BJ (cell line): ENCODE measurements at regions of chr14 and their contacts with region 1.

Region 1: GRCh38 chr14:24366721-24367513 is 1.1 kb upstream of the NFATC4 start:
- DNase-seq: peak; percentile 80
- H3K4me3 ChIP-seq: peak overlapping the region; percentile 51
- H3K27me3 ChIP-seq: no peaks in the 10 kb centered on the region
- CTCF ChIP-seq: no peak

Region 2: DNA sequence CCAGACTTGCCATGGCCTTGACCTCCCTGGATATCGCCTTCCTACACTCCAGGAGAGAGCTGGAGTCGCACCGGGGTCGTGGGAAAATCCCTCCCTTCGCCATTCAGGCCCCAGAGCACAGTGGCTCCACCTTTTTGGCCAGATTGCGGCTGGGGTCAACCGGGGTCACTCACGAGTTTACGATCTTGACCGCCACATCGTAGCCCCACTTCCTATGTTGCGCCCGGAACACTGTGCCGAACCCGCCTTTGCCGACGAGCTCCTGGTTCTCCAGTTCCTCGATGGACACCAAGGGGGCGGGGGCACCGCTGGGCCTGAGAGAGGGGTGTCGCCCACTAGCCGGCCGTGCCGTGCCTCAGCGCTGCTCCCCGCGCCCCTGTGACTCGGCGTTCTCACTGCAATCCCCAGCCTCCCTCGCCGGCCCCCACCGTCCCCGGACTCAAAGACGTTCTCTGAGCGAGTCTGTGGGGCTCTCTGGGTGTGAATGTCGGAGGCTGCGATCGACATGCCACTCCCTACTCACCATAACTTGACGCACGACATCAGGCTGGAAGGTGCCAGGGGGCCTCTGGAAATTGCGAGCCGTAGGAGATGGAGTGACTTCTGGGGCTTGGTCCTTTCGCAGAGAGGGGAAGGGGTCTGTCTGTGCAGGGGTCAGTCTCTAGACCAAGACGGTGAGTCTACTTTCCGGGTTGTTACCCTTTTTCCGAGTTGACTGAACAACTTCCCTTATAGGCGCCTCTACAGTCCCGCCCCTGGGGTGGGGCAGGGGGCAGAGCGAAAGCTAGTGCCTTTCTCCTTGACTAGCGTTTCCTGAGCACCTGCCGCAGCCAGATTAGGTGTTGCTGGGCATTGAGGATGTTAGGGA is 27.4 kb before region 1 on chr14 and contains the start of gene RIPK3:
- CTCF ChIA-PET with region 1: interaction called, 51 read pairs
- POLR2A ChIA-PET with region 1: no interaction called
- DNase-seq: no peak
- H3K4me3 ChIP-seq: peak within 1 kb of the TSS; percentile 41
- H3K27me3 ChIP-seq: peaks cover 5% of the 10 kb centered on the region
- CTCF ChIP-seq: no peak
- polyA plus RNA-seq, gene RIPK3: 4.3 and 4.4 TPM in 2 replicates

Region 3: GRCh38 chr14:24351517-24351916 is 15.4 kb before region 1 on chr14:
- CTCF ChIA-PET with region 1: interaction called, 22 read pairs
- POLR2A ChIA-PET with region 1: interaction called, 8 read pairs
- DNase-seq: no peak
- H3K4me3 ChIP-seq: no peak overlapping the region
- H3K27me3 ChIP-seq: peaks cover 6% of the 10 kb centered on the region; the same call in 1 of the 2 replicates
- CTCF ChIP-seq: peak; percentile 18

Region 4: DNA sequence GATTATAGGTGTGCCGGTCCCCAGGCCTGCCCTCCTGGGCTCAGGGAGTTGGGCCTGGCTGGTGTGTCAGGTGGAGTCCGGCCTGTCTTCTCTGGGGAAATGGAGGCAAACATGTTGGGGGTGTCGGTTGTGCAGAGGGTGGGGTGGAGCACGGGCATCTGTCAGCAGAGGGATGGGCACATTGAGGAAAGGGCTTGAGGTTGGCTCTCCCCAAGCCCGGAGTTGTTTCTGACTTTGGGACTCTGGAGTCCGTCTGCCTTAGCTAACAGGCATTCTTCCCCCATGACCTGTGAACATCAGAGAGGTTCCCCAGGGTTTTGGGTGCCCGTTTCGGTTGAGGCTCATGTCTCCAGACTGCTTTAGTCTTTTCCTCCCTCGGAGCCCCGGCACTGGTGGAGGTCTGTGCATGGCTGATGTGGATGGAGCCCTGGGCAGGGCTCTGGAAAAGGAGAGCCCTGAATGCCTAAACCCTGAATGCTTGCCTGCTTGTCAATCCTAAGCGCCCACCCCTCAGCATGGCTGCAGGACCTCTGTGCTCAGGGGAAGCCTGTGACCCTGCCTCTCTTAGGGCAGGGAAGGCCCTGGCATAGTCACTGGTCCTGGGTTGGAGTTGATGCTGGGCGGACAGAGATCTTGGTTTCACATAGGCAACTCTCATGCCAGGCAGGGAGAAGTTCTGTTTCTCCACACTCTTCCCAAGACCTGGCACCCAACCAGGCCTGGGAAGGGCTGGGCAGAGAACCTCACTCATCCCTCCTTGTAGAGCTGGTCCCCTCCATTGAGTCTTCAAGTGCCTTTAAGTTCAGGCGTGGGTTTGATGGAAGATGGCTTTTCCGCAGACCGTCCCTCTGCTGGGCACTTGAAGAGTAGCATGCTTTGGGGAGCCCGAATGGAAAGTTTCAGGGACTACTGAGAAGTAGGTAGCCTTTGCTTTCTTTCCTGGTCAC is 44.8 kb after region 1 on chr14:
- CTCF ChIA-PET with region 1: interaction called, 18 read pairs
- POLR2A ChIA-PET with region 1: no interaction called
- DNase-seq: no peak
- H3K4me3 ChIP-seq: no peak overlapping the region
- H3K27me3 ChIP-seq: no peaks in the 10 kb centered on the region
- CTCF ChIP-seq: peak; percentile 80